ENCODE measurements at regions of chr1 and their contacts with region 1.

Region 1: DNA sequence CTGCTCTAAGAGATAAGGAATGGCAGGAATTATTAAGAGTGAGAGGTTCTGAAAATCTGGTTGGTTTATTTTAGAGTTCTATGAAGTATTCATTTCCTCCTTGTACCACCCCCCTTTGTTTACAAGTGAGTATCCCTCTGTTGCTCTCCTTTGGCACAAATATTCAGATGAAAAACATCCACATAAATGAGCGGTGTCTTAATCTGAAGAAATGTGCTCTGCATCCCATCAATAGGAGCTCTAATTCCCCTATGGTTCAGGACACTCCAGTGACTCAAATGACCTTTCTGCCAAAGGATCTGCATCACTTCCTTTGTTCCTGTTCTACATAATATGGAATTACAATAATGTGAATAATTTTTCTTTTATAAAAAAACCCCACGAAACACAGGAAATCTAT is 16.6 kb downstream of the DDAH1 start:
- DNase-seq: no peak
- H3K4me3 Mint-ChIP-seq: no peak overlapping the region
- H3K27ac Mint-ChIP-seq: peak overlapping the region; percentile 13
- H3K4me1 Mint-ChIP-seq: peaks cover 44% of the 10 kb centered on the region
- H3K27me3 Mint-ChIP-seq: no peaks in the 10 kb centered on the region
- CTCF ChIP-seq: no peak

Region 2: DNA sequence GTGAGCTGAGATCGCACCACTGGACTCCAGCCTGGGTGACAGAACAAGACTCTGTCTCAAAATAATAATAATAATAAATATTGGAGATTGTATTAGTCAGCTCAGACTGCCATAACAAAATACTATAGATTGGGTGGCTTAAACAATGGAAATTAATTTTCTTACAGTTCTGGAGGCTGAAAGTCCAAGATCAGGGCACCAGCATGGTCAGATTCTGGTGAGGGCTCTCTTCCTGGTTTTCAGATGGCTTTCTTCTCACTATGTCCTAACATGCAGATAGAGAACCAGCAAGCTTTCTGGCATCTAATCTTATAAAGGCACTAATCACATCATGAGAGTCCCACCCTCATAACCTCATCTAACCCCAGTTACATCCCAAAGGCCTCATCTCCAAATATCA is 39.8 kb after region 1 on chr1:
- CTCF ChIA-PET with region 1: no interaction called
- intact Hi-C with region 1: loop called (anchors 2 kb)
- DNase-seq: no peak
- H3K4me3 Mint-ChIP-seq: no peak overlapping the region
- H3K27ac Mint-ChIP-seq: no peak overlapping the region
- H3K4me1 Mint-ChIP-seq: no peaks in the 10 kb centered on the region
- H3K27me3 Mint-ChIP-seq: no peaks in the 10 kb centered on the region
- CTCF ChIP-seq: no peak

Region 3: DNA sequence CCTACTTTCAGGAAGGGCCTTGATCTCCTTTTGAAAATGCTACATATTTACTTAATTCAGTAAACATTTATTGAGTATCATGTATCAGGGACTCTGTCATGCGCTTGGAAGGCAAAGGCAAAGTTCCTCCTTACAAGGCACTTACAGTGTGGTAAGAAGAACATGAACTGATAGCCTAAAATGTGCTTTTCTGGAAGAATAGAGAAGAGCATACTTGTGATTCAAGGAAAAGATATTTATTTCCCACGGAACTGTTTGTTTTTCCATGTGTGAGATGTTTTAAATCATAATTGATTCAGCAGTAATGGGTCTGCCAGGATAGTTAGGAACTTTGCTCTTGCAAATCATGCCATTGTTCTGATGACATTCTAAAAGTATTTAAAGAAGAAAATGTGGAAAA is 370.0 kb after region 1 on chr1:
- CTCF ChIA-PET with region 1: no interaction called
- intact Hi-C with region 1: no loop called
- DNase-seq: no peak
- H3K4me3 Mint-ChIP-seq: no peak overlapping the region
- H3K27ac Mint-ChIP-seq: no peak overlapping the region
- H3K4me1 Mint-ChIP-seq: peaks cover 35% of the 10 kb centered on the region
- H3K27me3 Mint-ChIP-seq: no peaks in the 10 kb centered on the region
- CTCF ChIP-seq: no peak

Measured in Calu3 (cell line).